Activated naive CD8-positive, alpha-beta T cell treated with anti-CD3 and anti-CD28 coated beads, Interleukin-2, amount 10 ng/mL, durations not matched to agents 7 days and 5 days (primary cell): ENCODE measurements at regions of chr12 and their contacts with region 1.

Region 1: DNA sequence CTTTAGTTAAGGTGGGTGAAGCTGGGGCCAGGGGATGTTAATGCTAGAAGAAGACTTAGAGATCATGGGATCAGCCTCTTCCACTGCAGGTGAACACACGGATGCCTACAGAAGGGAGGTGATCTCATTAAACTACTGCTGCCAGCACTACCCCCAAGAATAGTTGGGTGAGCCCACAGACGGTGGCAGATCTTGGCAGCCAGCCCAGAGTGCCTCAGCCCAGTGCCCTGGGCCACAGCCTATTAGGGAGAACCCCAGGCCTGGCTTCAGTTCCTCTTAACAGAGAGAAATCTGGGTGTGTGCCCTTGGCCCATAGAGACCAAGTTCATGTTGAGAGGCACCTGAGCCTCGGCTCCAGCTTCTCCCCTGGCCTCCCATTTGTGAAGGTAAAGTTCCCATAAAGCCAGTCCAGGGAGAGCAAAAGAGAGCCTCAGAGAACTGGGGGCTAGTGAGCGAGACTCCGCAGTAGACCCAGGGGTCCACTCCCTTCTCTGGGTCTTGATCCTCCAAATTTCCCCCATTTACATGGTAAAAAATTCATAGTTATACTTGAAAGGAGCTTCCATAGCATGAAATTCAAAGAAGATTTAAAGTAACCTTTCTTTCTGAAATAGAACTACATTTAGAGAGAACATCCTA is 125.0 kb upstream of the CCND2 start:
- DNase-seq: no peak
- ATAC-seq: peak; percentile 8
- H3K4me3 Mint-ChIP-seq: peak overlapping the region; percentile 35
- H3K27ac Mint-ChIP-seq: peak overlapping the region; percentile 89
- H3K4me1 Mint-ChIP-seq: peaks cover 81% of the 10 kb centered on the region
- H3K27me3 Mint-ChIP-seq: no peaks in the 10 kb centered on the region

Region 2: GRCh38 chr12:4118017-4118510 is 30.5 kb before region 1 on chr12:
- POLR2A ChIA-PET with region 1: interaction called, 71 read pairs
- DNase-seq: no peak
- ATAC-seq: peak; percentile 47
- H3K4me3 Mint-ChIP-seq: peak overlapping the region; percentile 69
- H3K27ac Mint-ChIP-seq: peak overlapping the region; percentile 91
- H3K4me1 Mint-ChIP-seq: peaks cover 66% of the 10 kb centered on the region
- H3K27me3 Mint-ChIP-seq: no peaks in the 10 kb centered on the region

Region 3: GRCh38 chr12:4164559-4165558 is 16.3 kb after region 1 on chr12:
- POLR2A ChIA-PET with region 1: interaction called, 40 read pairs
- DNase-seq: peak; percentile 79
- ATAC-seq: peak; percentile 98
- H3K4me3 Mint-ChIP-seq: peak overlapping the region; percentile 82
- H3K27ac Mint-ChIP-seq: peak overlapping the region; percentile 90
- H3K4me1 Mint-ChIP-seq: peaks cover 35% of the 10 kb centered on the region
- H3K27me3 Mint-ChIP-seq: no peaks in the 10 kb centered on the region